Posterior cingulate gyrus (tissue), 11 donors: ENCODE measurements at regions of chr12 and their contacts with region 1.

Region 1: GRCh38 chr12:31959161-31959700 is at the start of gene RESF1:
- DNase-seq: peak; percentile 72 to 98 (median 84)

Region 2: GRCh38 chr12:31728917-31729640 is 230.2 kb before region 1 on chr12 and contains the start of gene AMN1:
- intact Hi-C with region 1: loop called (anchors 5 kb)
- DNase-seq: peak; percentile 96 to 100 (median 98)

Region 3: GRCh38 chr12:32302218-32303173 is 343.3 kb after region 1 on chr12:
- intact Hi-C with region 1: loop called (anchors 10 kb)
- DNase-seq: peak in 1 of 10 donors; percentile 5

Region 4: GRCh38 chr12:32679091-32679919 is 720.1 kb after region 1 on chr12 and contains the start of gene DNM1L:
- intact Hi-C with region 1: loop called (anchors 10 kb)
- DNase-seq: peak; percentile 91 to 99 (median 95)